HCT116 (cell line): ENCODE measurements at regions of chr15 and their contacts with region 1.

Region 1: GRCh38 chr15:88546248-88547129 is at the start of gene DET1:
- DNase-seq: peak; percentile 94
- ATAC-seq: peak; percentile 97
- H3K4me3 ChIP-seq: peak within 1 kb of the TSS; percentile 74 to 77
- H3K27ac ChIP-seq: peak within 1 kb of the TSS; percentile 69
- H3K4me1 ChIP-seq: peaks cover 4 to 21% of the 10 kb centered on the region in 2 experiments; a peak in 3 of 4 replicates
- H3K27me3 ChIP-seq: no peaks in the 10 kb centered on the region
- CTCF ChIP-seq: peak; percentile 30 to 80 (median 74); a peak in 5 of 6 replicates
- POLR2A ChIP-seq: peak; percentile 59
- RAD21 ChIP-seq: no peak
- total RNA-seq, gene DET1: 2.5 TPM

Region 2: DNA sequence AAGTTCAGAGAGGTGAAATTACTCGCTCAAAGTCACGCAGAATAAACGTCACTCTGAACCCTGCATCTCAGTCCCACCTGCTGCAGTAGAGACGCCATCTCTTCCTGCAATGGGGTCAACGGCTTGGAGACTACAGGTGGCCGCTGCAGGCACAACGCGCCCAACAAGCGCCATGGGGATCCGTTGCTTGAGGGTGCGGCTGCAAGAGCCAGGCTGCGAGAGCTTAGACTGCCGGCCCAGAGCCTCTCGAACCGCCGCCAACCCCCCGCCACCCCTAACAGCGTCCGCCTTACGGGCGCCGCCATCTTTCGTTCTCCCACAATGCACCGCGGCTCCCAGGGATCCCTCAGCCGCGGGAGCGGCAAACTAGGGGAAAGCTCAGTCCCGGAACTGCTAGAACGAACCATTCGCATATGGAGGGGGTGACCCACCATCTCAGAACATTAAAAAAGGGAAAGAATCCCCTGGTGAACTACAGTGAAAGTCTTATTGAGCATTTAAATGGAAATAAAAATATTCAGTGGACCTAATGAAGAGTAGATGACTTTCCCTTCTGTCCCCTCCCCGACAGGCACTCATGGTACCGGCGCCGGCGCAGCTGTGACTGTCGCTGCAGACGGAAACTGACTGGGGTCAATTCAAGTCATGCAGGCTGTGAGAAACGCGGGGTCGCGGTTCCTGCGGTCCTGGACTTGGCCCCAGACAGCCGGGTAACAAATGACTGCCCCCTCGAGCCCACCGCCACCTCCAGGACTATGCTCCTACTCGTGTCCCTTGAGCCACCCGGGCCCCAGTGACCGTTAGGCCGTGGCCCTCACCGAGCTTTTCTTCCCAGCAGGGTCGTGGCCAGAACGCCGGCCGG is 79.2 kb before region 1 on chr15 and contains the starts of genes MRPL46 and MRPS11:
- CTCF ChIA-PET with region 1: no interaction called
- POLR2A ChIA-PET with region 1: no interaction called
- RAD21 ChIA-PET with region 1: no interaction called
- intact Hi-C with region 1: loop called (anchors 1 kb)
- DNase-seq: peak; percentile 81
- ATAC-seq: peak; percentile 87
- H3K4me3 ChIP-seq: peak within 1 kb of the TSS; percentile 91 to 92
- H3K27ac ChIP-seq: peak within 1 kb of the TSS; percentile 77
- H3K4me1 ChIP-seq: peaks cover 13 to 17% of the 10 kb centered on the region in 2 experiments
- H3K27me3 ChIP-seq: no peaks in the 10 kb centered on the region
- CTCF ChIP-seq: no peak
- POLR2A ChIP-seq: peak; percentile 37
- RAD21 ChIP-seq: no peak
- total RNA-seq, gene MRPL46: 30.5 TPM
- total RNA-seq, gene MRPS11: 47.4 TPM

Region 3: GRCh38 chr15:88529021-88529630 is 17.4 kb before region 1 on chr15:
- CTCF ChIA-PET with region 1: no interaction called
- POLR2A ChIA-PET with region 1: no interaction called
- RAD21 ChIA-PET with region 1: no interaction called
- intact Hi-C with region 1: no loop called
- DNase-seq: no peak
- ATAC-seq: no peak
- H3K4me3 ChIP-seq: no peak overlapping the region
- H3K27ac ChIP-seq: no peak overlapping the region
- H3K4me1 ChIP-seq: no peaks in the 10 kb centered on the region
- H3K27me3 ChIP-seq: no peaks in the 10 kb centered on the region
- CTCF ChIP-seq: no peak
- POLR2A ChIP-seq: no peak
- RAD21 ChIP-seq: no peak

Region 4: DNA sequence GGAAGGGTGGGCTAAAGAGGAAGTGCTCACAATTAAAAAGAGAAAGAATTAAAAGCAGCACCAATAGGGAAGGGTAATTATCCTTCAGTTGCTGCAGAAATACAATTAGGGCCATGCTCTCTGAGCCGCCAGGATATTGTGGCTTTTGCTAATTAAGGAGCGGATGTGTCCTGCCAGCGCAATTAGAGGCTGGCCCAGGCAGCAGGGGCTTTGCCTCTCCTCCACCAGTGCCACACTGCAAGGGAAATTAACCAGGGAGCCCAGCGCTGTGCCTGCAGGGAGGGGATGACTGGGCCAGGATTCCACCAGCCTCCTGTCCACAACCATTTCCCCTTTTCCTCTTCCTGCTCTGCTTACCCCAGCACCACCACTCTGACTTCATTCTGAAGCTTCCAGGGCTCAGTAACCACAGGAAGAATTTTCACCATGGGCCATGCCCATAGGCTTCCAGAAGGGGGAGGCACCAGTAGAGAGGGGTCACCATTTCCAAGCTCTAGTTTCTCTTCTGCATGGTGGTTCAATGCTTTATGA is 64.3 kb after region 1 on chr15:
- CTCF ChIA-PET with region 1: no interaction called
- POLR2A ChIA-PET with region 1: no interaction called
- RAD21 ChIA-PET with region 1: no interaction called
- intact Hi-C with region 1: loop called (anchors 5 kb)
- DNase-seq: no peak
- ATAC-seq: no peak
- H3K4me3 ChIP-seq: no peak overlapping the region
- H3K27ac ChIP-seq: no peak overlapping the region
- H3K4me1 ChIP-seq: peaks cover 0 to 24% of the 10 kb centered on the region in 2 experiments; a peak in 3 of 4 replicates
- H3K27me3 ChIP-seq: peaks cover 40% of the 10 kb centered on the region
- CTCF ChIP-seq: peak in 1 of 3 experiments; percentile 28; a peak in 2 of 6 replicates
- POLR2A ChIP-seq: no peak
- RAD21 ChIP-seq: no peak

Region 5: DNA sequence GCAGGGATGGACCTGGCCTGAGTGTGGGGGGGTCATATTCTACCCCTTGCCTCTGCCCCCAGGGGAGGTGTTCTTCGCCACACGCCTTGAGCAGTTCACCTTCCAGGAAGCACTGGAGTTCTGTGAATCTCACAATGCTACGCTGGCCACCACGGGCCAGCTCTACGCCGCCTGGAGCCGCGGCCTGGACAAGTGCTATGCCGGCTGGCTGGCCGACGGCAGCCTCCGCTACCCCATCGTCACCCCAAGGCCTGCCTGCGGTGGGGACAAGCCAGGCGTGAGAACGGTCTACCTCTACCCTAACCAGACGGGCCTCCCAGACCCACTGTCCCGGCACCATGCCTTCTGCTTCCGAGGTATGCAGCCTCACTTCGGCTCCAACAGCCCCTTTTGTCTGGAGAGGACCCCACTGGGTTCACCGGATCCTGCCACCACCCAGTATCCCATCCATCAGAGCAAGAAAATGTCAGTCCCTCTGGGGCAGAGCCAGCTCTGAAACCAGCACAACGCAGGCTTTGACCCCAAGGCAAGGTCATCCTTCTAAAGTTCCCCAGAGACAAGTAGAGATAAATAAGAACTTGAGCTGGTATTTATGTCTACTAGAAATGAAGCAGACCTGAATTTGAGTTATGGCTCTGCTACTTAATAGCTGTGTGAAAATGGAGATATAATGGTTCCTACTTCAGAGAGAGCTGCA is 303.0 kb after region 1 on chr15:
- CTCF ChIA-PET with region 1: no interaction called
- POLR2A ChIA-PET with region 1: no interaction called
- RAD21 ChIA-PET with region 1: no interaction called
- intact Hi-C with region 1: no loop called
- DNase-seq: no peak
- ATAC-seq: no peak
- H3K4me3 ChIP-seq: no peak overlapping the region
- H3K27ac ChIP-seq: no peak overlapping the region
- H3K4me1 ChIP-seq: no peaks in the 10 kb centered on the region
- H3K27me3 ChIP-seq: no peaks in the 10 kb centered on the region; the same call in 1 of the 2 replicates
- CTCF ChIP-seq: no peak
- POLR2A ChIP-seq: no peak
- RAD21 ChIP-seq: no peak